ENCODE measurements at regions of chr17 and their contacts with region 1.

Region 1: DNA sequence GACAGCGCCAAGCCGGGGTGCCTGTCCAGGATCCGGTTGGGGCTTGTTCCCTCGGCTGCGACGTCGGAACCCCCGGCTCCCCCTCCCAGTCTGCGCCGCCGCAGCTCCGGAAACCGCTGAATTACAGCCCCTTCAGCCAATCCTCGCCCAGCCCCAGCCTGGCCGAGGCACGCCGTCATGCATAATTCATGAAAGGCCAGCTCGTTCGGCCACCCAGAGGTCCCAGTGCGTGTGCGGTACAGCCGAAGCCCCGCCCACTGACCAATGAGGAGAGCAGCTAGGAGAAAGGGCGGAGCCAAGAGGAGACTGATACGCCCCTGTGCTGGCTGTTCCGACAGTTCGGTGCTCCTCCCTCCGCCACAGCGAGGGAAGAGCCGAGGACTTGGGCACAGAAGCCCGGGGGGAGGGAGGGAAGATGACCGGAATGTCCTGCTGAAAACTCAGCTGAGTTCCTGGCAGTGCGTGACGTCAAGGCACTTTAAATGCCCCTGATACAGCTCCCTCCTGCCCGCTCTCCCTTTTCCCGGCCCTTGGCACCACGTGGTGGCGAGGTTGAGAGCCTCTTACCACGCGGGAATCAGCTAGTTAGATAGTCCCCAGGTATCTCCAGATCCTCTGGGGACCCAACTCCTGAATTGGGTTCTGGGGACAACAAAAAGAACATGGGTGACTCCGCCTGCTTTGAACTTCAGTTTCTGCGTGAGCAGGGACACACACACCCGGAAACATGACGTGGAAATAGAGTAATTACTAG is at the start of gene STAT3:
- DNase-seq: peak; percentile 100
- ATAC-seq: peak; percentile 99
- H3K4me3 ChIP-seq: peak within 1 kb of the TSS; percentile 90 to 94
- H3K27ac ChIP-seq: peak within 1 kb of the TSS; percentile 94 to 98
- H3K4me1 ChIP-seq: no peaks in the 10 kb centered on the region
- H3K27me3 ChIP-seq: no peaks in the 10 kb centered on the region
- total RNA-seq, gene STAT3: 279 to 297 TPM

Region 2: GRCh38 chr17:42171831-42172230 is 216.7 kb before region 1 on chr17:
- intact Hi-C with region 1: no loop called
- DNase-seq: no peak
- ATAC-seq: no peak
- H3K4me3 ChIP-seq: no peak overlapping the region
- H3K27ac ChIP-seq: no peak overlapping the region
- H3K4me1 ChIP-seq: no peaks in the 10 kb centered on the region
- H3K27me3 ChIP-seq: no peaks in the 10 kb centered on the region

Region 3: DNA sequence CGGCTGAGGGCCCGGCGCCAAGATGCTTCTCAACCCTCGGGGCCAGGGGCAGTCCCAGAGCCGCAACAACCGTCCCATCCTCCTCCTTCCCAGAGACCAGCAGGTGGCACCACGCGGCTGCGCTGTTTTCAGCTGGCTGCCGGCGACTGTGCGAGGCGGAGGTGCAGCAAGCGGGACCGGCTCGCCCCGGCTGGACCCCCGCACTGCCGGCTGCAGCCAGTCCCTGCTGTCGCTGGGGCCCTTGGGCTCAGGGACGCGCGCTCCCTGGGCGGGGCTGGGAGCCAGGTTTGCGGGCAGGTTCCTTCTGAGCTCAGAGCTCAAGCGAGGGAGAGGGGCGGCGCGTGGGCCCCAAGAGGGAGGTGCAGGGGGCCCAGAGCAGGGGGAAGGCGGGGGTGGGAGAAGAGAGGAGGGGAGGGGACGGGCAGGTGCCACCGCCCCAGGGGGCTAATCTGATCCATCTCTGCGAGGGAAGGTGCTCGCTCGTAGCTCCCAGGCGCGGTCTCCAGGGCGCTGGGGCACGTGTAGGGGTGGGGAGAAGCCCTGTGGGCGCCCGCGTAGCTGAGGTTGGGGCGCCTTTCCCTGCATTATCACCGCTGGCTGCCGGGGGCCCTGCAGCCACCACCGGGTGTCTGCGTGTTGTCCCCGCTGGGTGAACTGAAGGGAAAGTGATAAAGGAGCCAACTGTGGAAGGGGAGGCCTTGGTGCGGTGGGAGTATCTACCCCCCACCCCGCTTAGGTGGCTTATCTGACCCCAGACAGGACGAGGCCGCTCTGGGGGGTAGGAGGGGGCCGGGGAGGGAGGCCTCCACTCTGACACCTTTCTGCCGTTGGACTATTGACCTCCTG is 76.0 kb before region 1 on chr17:
- intact Hi-C with region 1: no loop called
- DNase-seq: peak; percentile 92 to 94
- ATAC-seq: peak; percentile 86
- H3K4me3 ChIP-seq: no peak overlapping the region
- H3K27ac ChIP-seq: peak overlapping the region in 1 of 2 donors; percentile 65
- H3K4me1 ChIP-seq: no peaks in the 10 kb centered on the region
- H3K27me3 ChIP-seq: no peaks in the 10 kb centered on the region

Region 4: GRCh38 chr17:42322382-42323267 is 65.9 kb before region 1 on chr17:
- intact Hi-C with region 1: loop called (anchors 5 kb)
- DNase-seq: peak; percentile 94 to 97
- ATAC-seq: peak; percentile 90
- H3K4me3 ChIP-seq: no peak overlapping the region
- H3K27ac ChIP-seq: peak overlapping the region in 1 of 2 donors; percentile 4
- H3K4me1 ChIP-seq: no peaks in the 10 kb centered on the region
- H3K27me3 ChIP-seq: no peaks in the 10 kb centered on the region

Region 5: GRCh38 chr17:42329025-42329976 is 59.3 kb before region 1 on chr17:
- intact Hi-C with region 1: loop called (anchors 5 kb)
- DNase-seq: peak in 1 of 2 donors; percentile 47
- ATAC-seq: peak; percentile 62
- H3K4me3 ChIP-seq: no peak overlapping the region
- H3K27ac ChIP-seq: peak overlapping the region; percentile 57 to 79
- H3K4me1 ChIP-seq: no peaks in the 10 kb centered on the region
- H3K27me3 ChIP-seq: no peaks in the 10 kb centered on the region

Region 6: DNA sequence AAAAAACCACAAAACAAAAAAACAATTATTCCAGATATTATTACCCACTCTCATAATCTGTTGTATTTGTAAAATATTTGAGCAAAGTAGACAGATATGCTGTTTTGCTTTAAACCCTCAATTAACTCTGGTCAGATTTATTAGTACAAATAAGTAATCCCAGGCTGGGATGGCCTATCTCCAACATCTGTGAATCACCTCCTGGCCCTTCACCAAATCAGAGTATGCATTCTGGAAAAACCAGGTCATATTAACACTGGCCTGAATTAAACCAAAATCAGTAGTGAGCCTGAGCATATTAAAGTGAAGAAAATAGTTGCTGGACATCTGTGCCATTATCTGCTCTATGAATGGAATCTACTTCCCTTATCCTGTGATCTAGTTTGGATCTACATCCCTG is 41.4 kb before region 1 on chr17:
- intact Hi-C with region 1: loop called (anchors 5 kb)
- DNase-seq: peak in 1 of 2 donors; percentile 58
- ATAC-seq: peak; percentile 82
- H3K4me3 ChIP-seq: no peak overlapping the region
- H3K27ac ChIP-seq: peak overlapping the region in 1 of 2 donors; percentile 62
- H3K4me1 ChIP-seq: peaks cover 2 to 10% of the 10 kb centered on the region in 2 donors
- H3K27me3 ChIP-seq: no peaks in the 10 kb centered on the region